Tibial artery (tissue), 4 donors: ENCODE measurements at regions of chr11 and their contacts with region 1.

Region 1: GRCh38 chr11:117232092-117232878 is at the start of gene RNF214:
- DNase-seq: peak; percentile 56 to 88
- H3K4me3 ChIP-seq: peak within 1 kb of the TSS; percentile 66 to 83
- H3K27ac ChIP-seq: peak within 1 kb of the TSS; percentile 86 to 94
- H3K4me1 ChIP-seq: peaks cover 0 to 32% (median 26%) of the 10 kb centered on the region in 4 donors
- H3K27me3 ChIP-seq: no peaks in the 10 kb centered on the region
- CTCF ChIP-seq: peak; percentile 83 to 97

Region 2: DNA sequence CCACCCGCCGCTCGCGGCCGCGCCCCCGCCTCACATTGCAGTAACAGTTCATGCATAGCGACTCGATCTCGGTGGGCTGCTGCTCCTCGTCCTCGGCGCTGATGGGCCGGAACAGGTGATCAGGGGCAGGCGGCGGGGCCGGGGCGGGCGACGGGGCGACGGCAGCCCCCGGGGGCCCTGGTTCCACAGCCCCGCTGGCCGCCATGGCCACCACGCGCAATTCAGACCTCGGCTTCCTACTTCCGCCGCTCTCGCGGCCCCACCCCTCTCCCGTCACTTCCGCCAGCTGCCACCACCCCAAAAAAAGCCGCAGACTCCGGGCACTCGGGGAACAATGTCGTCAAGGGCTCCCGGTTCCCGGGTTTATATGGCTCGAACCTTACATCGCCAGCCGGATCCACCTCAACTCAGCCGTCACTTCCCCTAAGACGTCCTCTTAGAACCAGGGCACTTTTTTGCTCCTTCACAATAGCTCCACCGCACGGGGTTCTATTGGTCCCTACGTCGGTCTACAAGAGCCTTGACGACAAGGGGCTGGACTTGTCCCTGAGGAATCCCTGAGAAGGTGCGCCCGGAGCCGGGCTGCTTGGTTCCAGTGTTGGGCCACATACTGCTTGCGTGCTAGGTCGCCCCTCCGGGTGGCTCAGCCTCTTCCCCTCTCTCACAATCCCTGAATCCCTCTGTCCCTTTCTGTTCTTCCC is 444.3 kb before region 1 on chr11 and contains the start of gene ZPR1:
- intact Hi-C with region 1: loop called (anchors 10 kb)
- DNase-seq: peak; percentile 81 to 89
- H3K4me3 ChIP-seq: peak within 1 kb of the TSS; percentile 98 to 100
- H3K27ac ChIP-seq: peak within 1 kb of the TSS; percentile 86 to 88
- H3K4me1 ChIP-seq: peaks cover 0 to 35% (median 23%) of the 10 kb centered on the region in 4 donors
- H3K27me3 ChIP-seq: peaks cover 0 to 3% of the 10 kb centered on the region in 2 donors
- CTCF ChIP-seq: peak in 1 of 2 experiments; percentile 31

Region 3: DNA sequence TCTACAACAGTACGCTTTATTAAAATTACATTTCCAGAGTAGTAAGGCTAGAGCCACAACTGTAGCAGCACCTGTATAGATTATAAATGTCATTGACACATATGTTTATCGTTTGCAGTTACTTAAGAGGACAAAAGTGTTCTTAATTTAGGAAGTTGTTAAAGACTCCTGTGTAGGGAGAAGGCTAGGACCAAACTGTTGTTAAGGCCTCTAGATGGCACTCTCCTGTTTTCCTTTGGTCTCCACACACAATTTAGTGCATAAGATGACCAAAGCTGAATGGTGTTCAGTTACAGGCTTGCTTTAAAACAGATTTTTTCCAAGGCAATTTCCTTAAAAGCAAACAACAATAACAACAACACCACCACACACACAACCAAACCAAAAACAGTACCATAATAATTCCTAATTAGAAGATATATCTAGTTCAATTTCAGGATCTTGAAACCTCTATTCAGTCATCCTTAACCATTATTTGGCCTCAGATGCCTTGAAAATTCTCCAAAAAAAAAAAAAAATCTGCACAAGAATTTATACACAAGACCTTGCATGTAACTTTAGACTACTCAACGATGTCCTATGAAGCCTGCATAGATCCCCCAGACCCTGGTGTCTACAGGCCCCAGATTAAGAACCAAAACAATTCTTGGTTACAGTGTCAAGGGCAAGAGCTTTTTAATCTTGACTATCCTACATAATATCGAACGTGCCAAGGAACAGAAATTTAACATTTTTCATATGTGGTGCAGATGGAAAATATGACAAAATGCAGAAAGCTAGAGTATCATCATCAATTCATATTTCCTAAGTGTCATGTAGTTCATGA is 352.3 kb before region 1 on chr11:
- intact Hi-C with region 1: loop called (anchors 10 kb)
- DNase-seq: no peak
- H3K4me3 ChIP-seq: no peak overlapping the region
- H3K27ac ChIP-seq: no peak overlapping the region
- H3K4me1 ChIP-seq: peaks cover 0 to 3% (median 0%) of the 10 kb centered on the region in 4 donors
- H3K27me3 ChIP-seq: no peaks in the 10 kb centered on the region
- CTCF ChIP-seq: peak; percentile 60 to 70

Region 4: DNA sequence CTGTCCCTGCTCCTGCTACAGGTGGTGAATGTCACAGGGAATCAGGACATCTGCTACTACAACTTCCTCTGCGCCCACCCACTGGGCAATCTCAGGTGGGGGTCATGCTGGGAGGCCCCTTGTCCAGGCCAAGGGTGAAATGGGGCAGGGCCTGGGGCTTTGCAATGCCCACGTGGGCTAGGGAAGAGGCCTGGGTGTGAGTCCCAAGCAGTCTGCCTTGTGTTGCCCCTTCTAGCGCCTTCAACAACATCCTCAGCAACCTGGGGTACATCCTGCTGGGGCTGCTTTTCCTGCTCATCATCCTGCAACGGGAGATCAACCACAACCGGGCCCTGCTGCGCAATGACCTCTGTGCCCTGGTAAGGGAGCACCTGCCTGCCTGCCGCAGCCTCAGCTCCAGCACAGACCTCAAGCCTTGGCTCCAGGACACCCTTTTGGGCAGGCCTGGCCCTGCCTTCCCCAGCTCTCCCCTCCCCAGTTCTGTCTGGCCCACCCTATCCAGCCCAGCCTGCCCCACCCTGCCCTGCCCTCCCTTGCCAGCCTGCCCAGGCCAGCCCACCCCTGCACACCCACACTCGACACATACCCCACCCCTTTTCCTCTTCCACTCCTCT is 42.2 kb before region 1 on chr11:
- intact Hi-C with region 1: loop called (anchors 5 kb)
- DNase-seq: peak in 1 of 2 donors; percentile 60
- H3K4me3 ChIP-seq: no peak overlapping the region
- H3K27ac ChIP-seq: no peak overlapping the region
- H3K4me1 ChIP-seq: peaks cover 0 to 5% (median 0%) of the 10 kb centered on the region in 4 donors
- H3K27me3 ChIP-seq: no peaks in the 10 kb centered on the region
- CTCF ChIP-seq: no peak

Region 5: DNA sequence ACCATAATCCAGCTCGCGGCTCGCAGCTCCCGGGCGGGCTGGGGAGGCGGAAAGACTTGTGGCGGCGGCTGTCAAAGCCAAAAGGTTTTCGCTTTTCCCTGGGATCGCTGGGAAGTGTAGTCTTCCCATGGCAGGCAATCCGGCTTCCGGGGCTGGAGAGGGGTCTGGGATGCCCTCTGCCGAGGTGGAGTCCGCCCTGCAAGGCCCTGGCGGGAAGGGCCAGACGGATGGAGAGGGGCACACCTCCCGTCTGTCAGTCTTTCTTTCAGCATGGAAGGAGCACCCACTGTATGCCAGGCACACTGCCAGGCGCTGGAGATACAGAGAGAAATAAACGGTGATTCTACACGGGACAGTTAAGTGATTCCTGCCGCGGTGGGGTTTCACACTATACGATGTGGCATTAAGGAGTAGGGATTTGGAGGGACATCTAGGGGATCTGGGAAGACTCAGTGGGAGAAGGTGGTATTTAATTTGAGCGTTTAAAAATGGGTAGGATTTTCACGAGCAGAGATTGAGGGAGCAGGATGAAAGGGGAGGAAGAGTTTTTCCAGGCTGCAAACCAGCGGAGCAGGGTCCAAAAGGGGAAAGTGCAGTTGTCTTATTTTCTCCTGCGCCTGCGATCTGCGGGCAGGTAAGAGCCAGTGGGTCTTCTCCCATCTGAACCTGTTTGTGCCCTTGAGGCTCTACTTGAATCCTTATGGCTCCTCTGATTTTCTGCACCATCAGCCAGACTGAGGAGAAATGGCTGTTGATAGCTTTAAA is 84.1 kb after region 1 on chr11 and contains the start of gene BACE1:
- intact Hi-C with region 1: loop called (anchors 5 kb)
- DNase-seq: peak; percentile 82 to 90
- H3K4me3 ChIP-seq: peak within 1 kb of the TSS; percentile 95 to 96
- H3K27ac ChIP-seq: peak within 1 kb of the TSS; percentile 62 to 78
- H3K4me1 ChIP-seq: peaks cover 0 to 38% (median 21%) of the 10 kb centered on the region in 4 donors
- H3K27me3 ChIP-seq: no peaks in the 10 kb centered on the region
- CTCF ChIP-seq: no peak

Region 6: DNA sequence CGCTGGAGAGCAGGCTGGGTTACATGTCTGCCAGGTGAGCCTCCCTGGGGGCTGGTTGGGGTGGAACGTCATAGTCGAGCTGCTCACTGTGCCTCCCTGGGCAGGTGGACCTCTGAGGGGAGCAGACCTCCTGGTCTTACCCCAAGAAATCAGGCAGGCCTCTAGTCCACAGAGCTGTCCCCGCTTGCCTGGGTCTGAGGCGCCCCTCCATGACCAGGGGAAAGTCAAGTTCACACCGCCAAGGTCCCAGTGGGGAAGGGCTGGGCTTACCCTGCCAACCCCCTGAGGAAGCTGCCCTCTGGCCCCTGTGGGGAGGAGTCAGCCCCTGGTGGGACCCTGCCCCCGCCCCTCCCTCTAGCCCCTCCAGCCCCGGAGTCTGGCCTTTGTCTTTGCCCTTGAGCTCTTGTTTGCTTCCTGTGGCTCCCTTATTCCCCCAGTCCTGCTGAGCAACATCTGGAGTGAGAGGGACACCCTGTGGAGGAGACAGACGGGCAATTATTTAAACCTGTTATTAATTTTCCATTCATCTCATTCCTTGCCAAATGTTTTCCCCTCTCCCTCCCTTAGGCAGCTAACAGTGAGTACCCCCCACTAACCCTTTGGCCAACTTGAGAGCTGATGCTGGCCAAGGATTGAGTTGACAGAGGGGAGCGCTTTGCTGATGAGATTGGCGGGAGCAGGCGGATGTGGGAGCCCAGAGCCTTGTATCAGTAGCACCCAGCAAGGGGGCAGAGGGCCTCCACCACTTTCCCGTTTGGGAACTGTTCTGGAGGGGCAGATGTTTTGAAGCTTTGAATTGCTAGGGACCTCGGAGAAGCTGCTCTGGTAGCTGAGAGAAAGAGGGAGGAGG is 178.8 kb after region 1 on chr11:
- intact Hi-C with region 1: no loop called
- DNase-seq: peak in 1 of 2 donors; percentile 50
- H3K4me3 ChIP-seq: no peak overlapping the region
- H3K27ac ChIP-seq: no peak overlapping the region
- H3K4me1 ChIP-seq: no peaks in the 10 kb centered on the region
- H3K27me3 ChIP-seq: no peaks in the 10 kb centered on the region
- CTCF ChIP-seq: no peak